ENCODE measurements at regions of chr11 and their contacts with region 1.

Region 1: GRCh38 chr11:119356349-119357031 is 10.0 kb upstream of the MFRP start:
- DNase-seq: peak; percentile 72 to 89
- ATAC-seq: peak; percentile 87

Region 2: DNA sequence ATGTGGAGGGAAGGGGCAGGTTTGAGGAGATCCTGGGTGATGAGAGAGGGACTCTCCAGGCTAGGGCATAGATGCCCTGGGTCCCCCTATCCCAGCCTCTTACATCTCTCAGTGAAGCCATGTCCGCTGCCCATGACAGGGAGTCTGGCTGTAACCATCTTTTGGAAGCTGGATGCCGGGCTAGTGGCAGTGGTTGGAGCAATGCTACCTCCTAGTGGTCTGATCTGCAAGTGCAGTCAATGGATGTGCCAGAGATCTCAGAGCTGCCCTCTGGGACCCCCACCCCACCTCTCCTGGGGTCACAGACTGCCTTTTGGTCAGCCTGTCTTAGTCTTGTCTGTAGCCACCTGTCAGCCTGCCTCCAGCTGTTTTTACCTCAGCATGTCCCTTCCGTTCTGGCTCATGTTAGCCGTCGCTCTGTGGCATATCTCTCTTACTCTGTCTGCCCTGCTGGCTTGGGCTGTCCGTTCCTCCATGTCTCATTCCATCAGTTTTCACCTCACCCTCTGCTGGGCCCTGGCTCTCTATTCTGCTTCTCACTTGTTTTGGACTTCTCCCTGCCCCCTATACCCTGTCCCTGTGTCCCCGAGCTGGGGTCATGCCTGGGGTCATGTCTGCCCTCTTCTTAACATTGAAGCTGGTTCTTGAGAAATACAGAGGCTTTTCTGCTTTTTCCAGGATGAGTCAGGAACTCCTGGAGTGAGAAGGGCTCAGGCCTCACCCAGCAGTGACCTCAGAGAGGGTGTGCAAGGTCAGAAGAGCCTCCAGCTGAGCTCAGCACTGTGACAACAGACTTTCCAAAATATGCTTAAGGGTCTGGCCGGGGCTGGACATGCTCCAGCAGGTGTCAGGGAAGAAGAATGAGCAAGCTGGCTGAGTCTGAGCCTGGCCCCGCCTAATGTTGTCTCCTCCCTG is 118.4 kb after region 1 on chr11:
- intact Hi-C with region 1: loop called in 1 of 2 experiments (anchors 5 kb)
- DNase-seq: peak in 1 of 2 donors; percentile 46
- ATAC-seq: peak; percentile 65

Region 3: DNA sequence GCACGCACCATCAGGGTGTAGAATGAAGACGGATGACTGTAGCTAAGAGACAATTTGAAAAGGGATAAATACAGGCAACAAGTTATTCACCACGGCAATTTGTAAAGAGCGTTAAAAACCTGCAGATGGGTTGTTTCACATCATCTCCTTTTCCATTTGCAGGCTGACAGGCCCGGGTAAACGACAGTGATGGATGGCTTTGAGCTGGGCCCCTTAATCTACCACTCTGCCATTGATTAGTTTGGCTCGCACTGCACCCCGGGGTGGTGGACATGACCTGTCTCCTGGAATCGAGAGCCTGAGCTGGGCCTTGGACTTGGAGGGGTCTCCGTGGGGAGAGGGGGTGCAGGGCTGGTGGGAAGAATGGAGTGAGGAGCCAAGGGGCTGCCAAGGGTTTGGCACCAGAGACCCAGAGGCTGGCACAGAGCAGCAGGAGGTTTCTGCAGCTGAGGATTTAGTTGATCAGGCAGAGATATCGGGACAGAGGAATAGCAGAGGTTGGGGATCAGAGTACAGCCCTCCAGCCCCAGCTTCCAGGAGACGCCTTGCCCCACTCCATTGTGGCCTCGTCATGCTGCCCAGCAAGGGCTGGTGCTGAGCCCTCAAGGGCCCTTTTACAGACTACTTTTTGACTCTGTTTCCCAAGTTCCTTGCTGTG is 483.1 kb after region 1 on chr11:
- intact Hi-C with region 1: no loop called
- DNase-seq: no peak
- ATAC-seq: no peak